Caco-2 (cell line): ENCODE measurements at regions of chr11 and their contacts with region 1.

Region 1: DNA sequence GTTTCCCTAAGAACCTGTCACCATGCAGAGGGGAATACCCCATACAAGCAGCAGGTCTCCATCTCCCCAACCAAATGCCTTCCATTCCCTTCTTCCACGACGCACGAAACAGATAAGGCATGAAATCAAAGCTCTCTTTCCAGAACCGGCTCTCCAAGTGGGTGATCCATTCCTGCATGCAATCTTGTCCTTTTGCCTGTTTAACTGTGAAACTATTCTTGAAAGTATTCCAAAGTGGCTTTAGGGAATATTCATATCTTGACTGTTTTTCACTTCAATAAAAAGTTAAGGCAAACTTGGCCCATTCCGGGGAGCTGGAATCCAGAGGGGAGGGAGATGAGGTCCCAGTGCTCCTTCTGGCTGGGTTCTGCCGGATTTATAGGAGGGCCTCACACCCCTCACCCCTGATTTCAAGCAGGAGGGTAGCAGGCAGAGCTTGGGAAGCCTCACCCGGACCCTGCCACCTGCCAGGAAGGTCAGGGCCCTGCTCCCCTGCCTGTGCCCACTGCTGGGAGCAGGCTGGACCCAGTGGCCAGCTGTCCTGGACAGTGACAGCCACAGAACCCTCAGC is 60.9 kb downstream of the SCGB1A1 start:
- DNase-seq: no peak
- H3K4me3 ChIP-seq: no peak overlapping the region
- H3K4me3 Mint-ChIP-seq: peak overlapping the region; percentile 43
- H3K27ac Mint-ChIP-seq: peak overlapping the region; percentile 92
- H3K4me1 ChIP-seq: peaks cover 62% of the 10 kb centered on the region
- H3K4me1 Mint-ChIP-seq: peaks cover 40% of the 10 kb centered on the region
- H3K27me3 ChIP-seq: no peaks in the 10 kb centered on the region
- H3K27me3 Mint-ChIP-seq: no peaks in the 10 kb centered on the region
- CTCF ChIP-seq: no peak

Region 2: GRCh38 chr11:62383822-62384221 is 95.9 kb before region 1 on chr11:
- CTCF ChIA-PET with region 1: no interaction called
- POLR2A ChIA-PET with region 1: no interaction called
- intact Hi-C with region 1: loop called (anchors 5 kb)
- DNase-seq: no peak
- H3K4me3 ChIP-seq: no peak overlapping the region
- H3K4me3 Mint-ChIP-seq: no peak overlapping the region
- H3K27ac Mint-ChIP-seq: no peak overlapping the region
- H3K4me1 ChIP-seq: peaks cover 24% of the 10 kb centered on the region
- H3K4me1 Mint-ChIP-seq: peaks cover 21% of the 10 kb centered on the region
- H3K27me3 ChIP-seq: no peaks in the 10 kb centered on the region
- H3K27me3 Mint-ChIP-seq: no peaks in the 10 kb centered on the region
- CTCF ChIP-seq: no peak

Region 3: GRCh38 chr11:62456623-62457022 is 23.1 kb before region 1 on chr11:
- CTCF ChIA-PET with region 1: interaction called, 15 read pairs
- POLR2A ChIA-PET with region 1: interaction called, 16 read pairs
- intact Hi-C with region 1: no loop called
- DNase-seq: peak; percentile 70 to 83
- H3K4me3 ChIP-seq: no peak overlapping the region
- H3K4me3 Mint-ChIP-seq: no peak overlapping the region
- H3K27ac Mint-ChIP-seq: peak overlapping the region; percentile 35
- H3K4me1 ChIP-seq: peaks cover 55% of the 10 kb centered on the region
- H3K4me1 Mint-ChIP-seq: peaks cover 28% of the 10 kb centered on the region
- H3K27me3 ChIP-seq: no peaks in the 10 kb centered on the region
- H3K27me3 Mint-ChIP-seq: no peaks in the 10 kb centered on the region
- CTCF ChIP-seq: no peak

Region 4: GRCh38 chr11:62461740-62462507 is 17.8 kb before region 1 on chr11:
- CTCF ChIA-PET with region 1: interaction called, 15 read pairs
- POLR2A ChIA-PET with region 1: interaction called, 16 read pairs
- intact Hi-C with region 1: no loop called
- DNase-seq: no peak
- H3K4me3 ChIP-seq: no peak overlapping the region
- H3K4me3 Mint-ChIP-seq: no peak overlapping the region
- H3K27ac Mint-ChIP-seq: no peak overlapping the region
- H3K4me1 ChIP-seq: peaks cover 56% of the 10 kb centered on the region
- H3K4me1 Mint-ChIP-seq: peaks cover 46% of the 10 kb centered on the region
- H3K27me3 ChIP-seq: no peaks in the 10 kb centered on the region
- H3K27me3 Mint-ChIP-seq: no peaks in the 10 kb centered on the region
- CTCF ChIP-seq: no peak

Region 5: GRCh38 chr11:62497132-62497915 is 17.6 kb after region 1 on chr11:
- CTCF ChIA-PET with region 1: interaction called, 4 read pairs
- POLR2A ChIA-PET with region 1: interaction called, 11 read pairs
- intact Hi-C with region 1: no loop called
- DNase-seq: peak; percentile 75 to 82
- H3K4me3 ChIP-seq: no peak overlapping the region
- H3K4me3 Mint-ChIP-seq: no peak overlapping the region
- H3K27ac Mint-ChIP-seq: peak overlapping the region; percentile 76
- H3K4me1 ChIP-seq: peaks cover 48% of the 10 kb centered on the region
- H3K4me1 Mint-ChIP-seq: peaks cover 33% of the 10 kb centered on the region
- H3K27me3 ChIP-seq: no peaks in the 10 kb centered on the region
- H3K27me3 Mint-ChIP-seq: no peaks in the 10 kb centered on the region
- CTCF ChIP-seq: peak; percentile 59 to 68

Region 6: DNA sequence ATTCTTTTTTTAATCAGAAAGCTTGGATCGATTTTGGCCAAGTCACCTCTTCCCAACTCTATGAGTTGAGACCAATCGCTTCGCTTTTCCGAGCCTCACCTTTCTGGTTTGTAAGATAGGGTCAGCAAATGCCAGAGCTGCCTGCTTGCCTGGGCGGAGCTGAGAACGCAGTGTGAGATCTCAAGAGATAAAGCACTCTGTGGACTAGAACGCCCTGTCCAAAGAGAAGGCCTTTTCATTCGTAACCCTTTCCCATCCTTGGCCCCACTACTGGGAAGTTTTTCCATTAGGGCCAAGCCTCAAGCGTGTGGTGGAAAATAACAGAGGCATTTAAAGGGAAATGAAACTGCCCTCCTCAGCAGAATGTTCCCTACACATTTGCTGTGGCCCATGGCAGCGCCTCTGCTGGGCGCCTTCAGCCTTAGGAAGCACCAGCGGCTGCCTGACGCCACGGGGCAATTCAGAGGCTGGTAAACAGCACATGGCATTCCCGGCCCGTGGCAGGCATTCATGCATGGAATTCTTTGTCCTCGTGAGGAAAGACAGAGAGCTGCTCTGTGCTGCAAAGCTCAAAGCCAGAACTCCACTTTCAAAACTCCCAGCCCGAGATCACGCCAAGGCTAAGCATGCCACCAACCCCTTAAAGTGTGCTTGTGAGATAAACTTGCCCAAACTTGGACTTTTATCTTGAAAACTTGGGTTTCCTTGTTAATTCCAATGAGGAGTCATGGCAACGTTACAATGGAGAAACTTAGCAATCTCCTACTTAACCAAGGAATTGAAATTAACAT is 28.7 kb after region 1 on chr11:
- CTCF ChIA-PET with region 1: interaction called, 8 read pairs
- POLR2A ChIA-PET with region 1: interaction called, 3 read pairs
- intact Hi-C with region 1: loop called (anchors 2 kb)
- DNase-seq: peak; percentile 79 to 83
- H3K4me3 ChIP-seq: 0 out of 2 replicates have a peak overlapping the region, but pooled peaks have one; percentile 5
- H3K4me3 Mint-ChIP-seq: peak overlapping the region; percentile 58
- H3K27ac Mint-ChIP-seq: peak overlapping the region; percentile 85
- H3K4me1 ChIP-seq: peaks cover 56% of the 10 kb centered on the region
- H3K4me1 Mint-ChIP-seq: peaks cover 36% of the 10 kb centered on the region
- H3K27me3 ChIP-seq: no peaks in the 10 kb centered on the region
- H3K27me3 Mint-ChIP-seq: no peaks in the 10 kb centered on the region
- CTCF ChIP-seq: peak; percentile 41 to 74

Region 7: GRCh38 chr11:62551696-62552250 is 72.1 kb after region 1 on chr11:
- CTCF ChIA-PET with region 1: no interaction called
- POLR2A ChIA-PET with region 1: interaction called, 15 read pairs
- intact Hi-C with region 1: no loop called
- DNase-seq: peak; percentile 74 to 77
- H3K4me3 ChIP-seq: no peak overlapping the region
- H3K4me3 Mint-ChIP-seq: peak overlapping the region; percentile 71
- H3K27ac Mint-ChIP-seq: peak overlapping the region; percentile 96
- H3K4me1 ChIP-seq: peaks cover 87% of the 10 kb centered on the region
- H3K4me1 Mint-ChIP-seq: peaks cover 61% of the 10 kb centered on the region
- H3K27me3 ChIP-seq: no peaks in the 10 kb centered on the region
- H3K27me3 Mint-ChIP-seq: no peaks in the 10 kb centered on the region
- CTCF ChIP-seq: no peak

Region 8: GRCh38 chr11:63155794-63156193 is 676.1 kb after region 1 on chr11:
- CTCF ChIA-PET with region 1: no interaction called
- POLR2A ChIA-PET with region 1: no interaction called
- intact Hi-C with region 1: no loop called
- DNase-seq: no peak
- H3K4me3 ChIP-seq: no peak overlapping the region
- H3K4me3 Mint-ChIP-seq: no peak overlapping the region
- H3K27ac Mint-ChIP-seq: no peak overlapping the region
- H3K4me1 ChIP-seq: no peaks in the 10 kb centered on the region
- H3K4me1 Mint-ChIP-seq: no peaks in the 10 kb centered on the region
- H3K27me3 ChIP-seq: no peaks in the 10 kb centered on the region; the same call in 1 of the 2 replicates
- H3K27me3 Mint-ChIP-seq: peaks cover 15% of the 10 kb centered on the region
- CTCF ChIP-seq: no peak